Heart left ventricle (tissue), 16 donors: ENCODE measurements at regions of chr5 and their contacts with region 1.

Region 1: DNA sequence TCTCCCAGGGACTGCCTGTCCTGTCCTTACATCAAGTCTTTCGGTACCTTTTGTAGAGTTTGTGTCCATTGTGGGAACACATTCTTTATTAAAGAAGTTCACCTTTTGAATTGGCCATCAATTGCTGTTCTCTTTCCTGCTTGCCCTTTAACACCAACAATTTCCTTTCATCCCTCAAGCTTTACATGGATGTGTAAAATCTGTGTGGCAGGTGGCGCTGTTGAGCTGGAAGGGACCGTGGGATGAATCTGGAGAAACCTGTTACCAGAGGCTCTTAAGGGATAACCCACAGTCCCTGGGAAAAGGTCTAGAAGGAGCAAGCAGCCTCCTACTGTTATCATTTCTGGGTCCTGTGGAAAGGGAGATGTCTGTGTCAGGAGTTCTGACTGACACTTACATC is 7.9 kb upstream of the ZFP62 start:
- DNase-seq: peak; percentile 73 to 84 (median 76)
- ATAC-seq: peak in 3 of 4 donors; percentile 78 to 85 (median 80)
- H3K4me3 ChIP-seq: no peak overlapping the region
- H3K27ac ChIP-seq: no peak overlapping the region
- H3K4me1 ChIP-seq: peaks cover 0 to 15% (median 0%) of the 10 kb centered on the region in 12 donors
- H3K27me3 ChIP-seq: peaks cover 0 to 7% (median 0%) of the 10 kb centered on the region in 9 donors
- CTCF ChIP-seq: peak; percentile 55 to 80 (median 70)
- POLR2A ChIP-seq: no peak

Region 2: DNA sequence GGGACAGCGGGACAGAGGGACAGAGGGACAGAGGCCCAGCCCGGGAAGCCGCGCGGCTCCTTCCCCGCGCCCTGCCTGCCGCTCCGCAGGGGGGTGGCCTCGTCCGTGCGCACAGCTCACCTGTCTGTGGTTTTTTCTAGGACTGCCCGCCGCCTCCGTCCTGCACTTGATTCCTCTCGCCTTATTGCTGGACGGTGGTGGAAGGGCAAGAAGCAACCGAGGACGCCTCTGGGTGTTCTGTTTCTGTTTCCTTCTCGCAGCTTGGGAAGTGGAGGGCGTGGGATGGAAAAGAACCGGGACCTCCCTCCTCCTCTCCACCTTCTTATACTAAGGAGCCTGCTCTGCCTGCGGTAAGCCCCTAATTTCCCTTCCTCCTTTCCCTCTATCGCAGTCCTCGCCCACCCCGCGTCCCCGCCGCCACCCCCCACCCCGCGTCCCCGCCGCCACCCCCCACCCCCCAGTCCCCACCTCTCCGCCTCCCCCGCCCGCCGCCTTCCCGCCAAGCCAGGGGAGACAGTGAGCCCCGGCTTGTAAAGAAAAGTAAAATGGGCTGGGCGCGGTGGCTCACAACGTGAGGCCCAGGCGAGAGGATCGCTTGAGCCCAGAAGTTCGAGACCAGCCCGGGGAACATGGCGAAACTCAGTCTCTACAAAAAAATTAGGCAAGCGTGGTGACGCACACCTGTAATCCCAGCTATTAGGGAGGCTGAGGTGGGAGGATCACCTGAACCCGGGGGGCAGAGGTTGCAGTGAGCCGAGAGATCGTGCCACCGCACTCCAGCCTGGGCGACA is 210.0 kb before region 1 on chr5:
- intact Hi-C with region 1: no loop called
- DNase-seq: no peak
- ATAC-seq: no peak
- H3K4me3 ChIP-seq: peak overlapping the region in 2 of 12 donors; percentile 7 to 27
- H3K27ac ChIP-seq: no peak overlapping the region
- H3K4me1 ChIP-seq: no peaks in the 10 kb centered on the region
- H3K27me3 ChIP-seq: peaks cover 0 to 28% (median 19%) of the 10 kb centered on the region in 9 donors
- CTCF ChIP-seq: no peak
- POLR2A ChIP-seq: no peak

Region 3: DNA sequence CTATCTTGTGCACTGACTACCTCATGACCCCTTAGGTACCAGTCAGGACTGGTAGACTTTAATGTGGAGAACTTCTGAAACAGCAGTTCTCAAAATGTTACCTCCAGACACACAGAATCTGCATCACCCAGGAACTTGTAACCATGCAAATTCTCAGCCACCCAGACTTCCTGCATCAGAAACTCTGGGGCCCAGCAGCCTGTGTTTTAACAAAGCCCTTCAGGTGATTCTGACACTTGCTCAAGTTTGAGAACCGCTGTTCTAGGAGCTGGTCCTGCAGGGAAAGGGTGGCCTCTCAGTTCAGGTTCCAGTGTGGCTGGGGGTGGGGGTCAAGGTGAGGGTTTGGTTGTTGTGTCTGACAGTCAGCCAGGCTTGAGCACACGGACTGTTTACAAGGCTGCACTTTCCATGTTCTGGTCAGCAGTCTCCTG is 36.3 kb before region 1 on chr5:
- intact Hi-C with region 1: no loop called
- DNase-seq: no peak
- ATAC-seq: no peak
- H3K4me3 ChIP-seq: peak overlapping the region in 11 of 12 donors; percentile 67 to 100 (median 86)
- H3K27ac ChIP-seq: peak overlapping the region in 8 of 12 donors; percentile 23 to 100 (median 98)
- H3K4me1 ChIP-seq: peaks cover 0 to 47% (median 25%) of the 10 kb centered on the region in 12 donors
- H3K27me3 ChIP-seq: no peaks in the 10 kb centered on the region
- CTCF ChIP-seq: no peak
- POLR2A ChIP-seq: no peak

Region 4: GRCh38 chr5:180910735-180911134 is 41.8 kb after region 1 on chr5:
- intact Hi-C with region 1: no loop called
- DNase-seq: no peak
- ATAC-seq: no peak
- H3K4me3 ChIP-seq: no peak overlapping the region
- H3K27ac ChIP-seq: no peak overlapping the region
- H3K4me1 ChIP-seq: peaks cover 0 to 9% (median 0%) of the 10 kb centered on the region in 12 donors
- H3K27me3 ChIP-seq: peaks cover 0 to 11% (median 0%) of the 10 kb centered on the region in 9 donors
- CTCF ChIP-seq: no peak
- POLR2A ChIP-seq: no peak

Region 5: DNA sequence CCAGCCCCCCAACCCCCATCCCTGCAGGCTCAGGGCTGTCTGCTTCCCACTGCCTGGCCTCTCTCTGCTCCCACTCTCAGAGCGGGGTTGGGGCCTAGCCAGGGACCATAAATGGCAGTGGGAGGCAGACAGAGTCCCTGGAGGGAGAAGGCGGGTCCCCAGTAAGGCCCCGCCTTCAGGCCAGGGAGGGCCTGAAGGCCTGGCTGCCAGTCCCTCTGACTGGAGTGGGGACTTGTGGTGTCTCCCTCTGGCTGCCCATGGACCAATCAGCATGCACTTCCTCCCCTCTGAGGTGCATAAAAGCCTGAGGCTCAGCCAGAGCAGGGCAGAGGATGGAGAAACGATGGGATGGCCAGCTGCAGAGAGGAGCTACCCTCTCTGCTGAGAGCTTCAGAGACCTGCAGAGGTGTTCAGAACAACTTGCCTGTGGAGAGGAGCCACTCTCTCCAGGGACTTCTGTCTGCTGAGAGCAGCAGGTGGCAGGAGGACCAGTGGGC is 168.5 kb after region 1 on chr5:
- intact Hi-C with region 1: loop called in 5 of 10 experiments (anchors 5 to 10 kb)
- DNase-seq: peak in 1 of 5 donors; percentile 50
- ATAC-seq: peak; percentile 59 to 82 (median 72)
- H3K4me3 ChIP-seq: no peak overlapping the region
- H3K27ac ChIP-seq: peak overlapping the region in 3 of 12 donors; percentile 3 to 38 (median 22)
- H3K4me1 ChIP-seq: peaks cover 0 to 13% (median 1%) of the 10 kb centered on the region in 12 donors
- H3K27me3 ChIP-seq: peaks cover 0 to 11% (median 0%) of the 10 kb centered on the region in 9 donors
- CTCF ChIP-seq: no peak
- POLR2A ChIP-seq: peak in 1 of 2 donors; percentile 93

Region 6: DNA sequence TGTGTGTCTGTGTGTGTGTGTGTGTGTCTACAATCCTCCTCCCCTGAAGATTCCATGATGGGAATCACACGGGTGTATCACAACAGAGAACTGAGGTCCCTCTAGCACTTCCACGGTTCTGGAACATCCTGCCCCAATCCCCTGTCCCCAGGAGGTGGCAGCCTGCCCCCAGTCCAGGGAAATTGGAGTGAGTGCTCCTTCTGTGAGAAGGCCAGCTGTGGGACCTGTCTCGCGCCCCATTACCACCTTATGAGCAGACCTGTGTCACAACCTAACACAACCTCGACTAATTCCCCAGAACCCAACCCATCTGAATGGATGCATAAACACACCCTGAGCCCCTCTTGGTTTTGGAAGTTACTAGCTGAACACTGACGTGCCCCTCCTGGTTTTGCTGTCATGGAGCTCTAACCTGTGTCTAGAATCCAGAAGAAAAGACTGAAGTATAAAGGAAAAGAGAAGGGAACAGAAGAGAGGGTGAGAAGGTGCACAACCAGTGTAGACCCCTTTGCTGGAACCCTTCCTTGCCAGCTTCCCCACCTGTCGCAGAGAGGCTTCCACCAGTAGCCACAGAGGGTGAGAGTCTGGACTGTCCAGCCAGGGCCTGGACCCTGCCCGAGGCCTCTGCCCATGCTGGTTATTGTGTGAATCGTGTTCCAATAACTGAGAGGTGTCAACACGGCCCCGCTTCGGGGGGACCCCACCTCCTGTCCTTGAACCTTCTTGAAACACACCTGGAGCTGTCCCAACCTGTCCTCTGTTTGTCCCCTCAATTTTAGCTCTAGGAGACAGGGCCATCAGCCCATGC is 174.5 kb after region 1 on chr5:
- intact Hi-C with region 1: loop called in 5 of 10 experiments (anchors 5 to 10 kb)
- DNase-seq: peak in 1 of 5 donors; percentile 42
- ATAC-seq: peak in 2 of 4 donors; percentile 30 to 48
- H3K4me3 ChIP-seq: peak overlapping the region in 11 of 12 donors; percentile 11 to 65 (median 52)
- H3K27ac ChIP-seq: peak overlapping the region; percentile 60 to 92 (median 83)
- H3K4me1 ChIP-seq: peaks cover 0 to 20% (median 0%) of the 10 kb centered on the region in 12 donors
- H3K27me3 ChIP-seq: peaks cover 0 to 33% (median 9%) of the 10 kb centered on the region in 9 donors
- CTCF ChIP-seq: peak in 8 of 12 donors; percentile 6 to 48 (median 25)
- POLR2A ChIP-seq: no peak

Region 7: DNA sequence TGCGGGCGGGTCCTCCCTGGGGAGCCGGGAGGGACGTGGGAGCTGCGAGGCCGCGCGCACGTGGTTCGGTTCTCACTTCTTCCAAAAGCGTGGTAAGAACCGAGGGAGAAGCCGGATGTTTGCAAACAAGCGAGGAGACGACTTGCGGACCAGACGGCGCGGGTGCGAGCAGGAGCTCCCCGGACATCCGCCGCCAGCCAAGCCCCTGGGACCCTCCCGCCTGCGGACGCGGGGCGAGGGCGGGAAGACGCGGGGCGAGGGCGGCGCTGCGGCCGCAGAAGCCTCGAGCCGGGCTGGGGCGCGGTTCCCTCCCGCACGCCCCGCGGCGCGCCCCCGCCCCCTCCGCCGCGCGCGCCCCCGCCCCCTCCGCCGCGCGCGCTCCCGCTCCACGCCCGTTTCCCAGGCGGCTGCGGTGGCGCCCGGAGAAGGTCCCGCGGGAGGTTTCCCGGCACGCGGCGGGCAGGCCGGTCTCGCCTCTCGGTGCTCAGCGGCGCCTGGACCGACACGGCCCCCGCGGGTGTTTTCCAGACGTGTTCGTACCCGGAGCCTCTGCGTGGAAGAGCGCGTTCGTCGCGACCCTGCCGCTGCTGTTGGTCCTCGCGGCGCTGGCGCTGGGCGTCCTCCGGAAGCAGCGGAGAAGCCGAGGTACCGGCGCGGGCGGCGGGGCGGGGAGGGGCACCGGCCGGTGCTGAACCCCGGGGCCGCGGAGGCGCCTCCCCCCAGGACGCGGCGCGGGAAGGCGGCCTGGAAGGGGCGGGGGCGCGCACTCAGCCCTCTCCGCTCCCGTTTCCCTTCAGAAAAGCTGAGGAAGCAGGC is 183.9 kb after region 1 on chr5:
- intact Hi-C with region 1: loop called in 2 of 10 experiments (anchors 5 kb)
- DNase-seq: peak in 2 of 5 donors; percentile 49 to 65
- ATAC-seq: peak in 3 of 4 donors; percentile 36 to 55 (median 47)
- H3K4me3 ChIP-seq: peak overlapping the region; percentile 34 to 72 (median 60)
- H3K27ac ChIP-seq: peak overlapping the region; percentile 57 to 94 (median 88)
- H3K4me1 ChIP-seq: peaks cover 0 to 42% (median 18%) of the 10 kb centered on the region in 12 donors
- H3K27me3 ChIP-seq: peaks cover 20 to 88% (median 66%) of the 10 kb centered on the region in 9 donors
- CTCF ChIP-seq: no peak
- POLR2A ChIP-seq: no peak

Region 8: DNA sequence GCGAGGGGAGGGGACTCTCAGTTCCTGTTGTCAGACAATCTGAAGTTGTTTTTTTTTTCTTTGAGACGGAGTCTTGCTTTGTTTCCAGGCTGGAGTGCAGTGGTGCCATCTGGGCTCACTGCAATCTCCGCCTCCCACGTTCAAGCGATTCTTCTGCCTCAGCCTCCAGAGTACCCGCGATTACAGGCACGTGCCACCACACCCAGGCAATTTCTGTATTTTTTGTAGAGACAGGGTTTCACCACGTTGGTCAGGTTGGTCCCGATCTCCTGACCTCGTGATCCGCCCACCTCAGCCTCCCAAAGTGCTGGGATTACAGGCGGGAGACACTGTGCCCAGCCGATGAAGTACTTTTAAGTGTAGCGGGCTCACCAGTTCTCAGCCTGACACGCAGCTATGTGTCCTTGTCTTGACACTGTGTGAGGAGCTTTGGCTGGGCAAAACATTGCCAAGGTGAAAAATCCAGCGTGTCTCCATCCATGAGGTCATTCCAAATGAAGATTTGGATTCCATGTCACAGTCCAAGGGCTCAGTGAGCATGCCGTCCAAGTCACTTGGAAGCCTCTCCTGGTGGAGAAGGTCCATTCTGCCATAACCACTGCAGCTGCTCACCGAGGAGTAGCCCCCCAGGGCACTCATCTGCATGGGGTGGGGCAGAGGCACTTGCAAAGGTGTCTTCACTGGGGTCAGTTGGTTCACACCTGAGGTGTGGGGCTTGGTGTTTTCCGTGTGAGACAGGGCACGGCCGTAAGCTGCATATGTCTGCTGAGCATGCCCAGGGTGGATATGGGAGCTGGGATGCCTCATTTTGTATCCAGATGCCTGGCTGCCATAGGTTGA is 230.0 kb after region 1 on chr5:
- intact Hi-C with region 1: loop called in 1 of 10 experiments (anchors 10 kb)
- DNase-seq: no peak
- ATAC-seq: no peak
- H3K4me3 ChIP-seq: no peak overlapping the region
- H3K27ac ChIP-seq: no peak overlapping the region
- H3K4me1 ChIP-seq: peaks cover 0 to 5% (median 0%) of the 10 kb centered on the region in 12 donors
- H3K27me3 ChIP-seq: peaks cover 7 to 22% (median 18%) of the 10 kb centered on the region in 9 donors
- CTCF ChIP-seq: no peak
- POLR2A ChIP-seq: no peak

Region 9: DNA sequence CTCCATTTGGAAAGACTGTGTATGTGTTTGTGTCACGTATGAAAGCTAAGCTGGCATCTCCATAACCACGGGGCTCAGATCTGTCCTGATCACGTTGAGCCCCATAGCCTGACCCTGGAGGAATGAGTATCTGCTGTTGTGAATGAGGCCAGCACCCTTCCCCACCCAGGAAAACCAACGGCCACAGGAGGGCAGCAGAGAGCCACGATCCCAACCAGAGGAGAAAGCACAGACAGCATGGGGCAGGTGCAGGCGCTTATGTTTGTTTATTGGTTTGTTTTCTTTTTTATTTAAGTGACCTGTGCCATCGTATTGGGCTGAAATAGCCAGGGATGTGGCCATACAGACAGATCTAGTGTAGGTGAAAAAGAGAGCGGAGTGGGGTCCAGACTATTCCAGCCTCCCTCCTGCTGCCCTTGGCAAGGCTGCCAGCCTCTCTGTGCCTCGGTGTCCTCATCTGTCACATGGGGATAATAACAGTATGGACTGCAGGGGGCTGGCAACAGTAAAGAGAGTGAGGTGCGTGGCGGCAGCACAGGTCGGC is 290.4 kb after region 1 on chr5:
- intact Hi-C with region 1: loop called in 6 of 10 experiments (anchors 10 kb)
- DNase-seq: peak; percentile 79 to 91 (median 81)
- ATAC-seq: peak; percentile 72 to 94 (median 92)
- H3K4me3 ChIP-seq: no peak overlapping the region
- H3K27ac ChIP-seq: peak overlapping the region in 1 of 12 donors; percentile 81
- H3K4me1 ChIP-seq: peaks cover 0 to 14% (median 2%) of the 10 kb centered on the region in 12 donors
- H3K27me3 ChIP-seq: peaks cover 0 to 14% (median 9%) of the 10 kb centered on the region in 9 donors
- CTCF ChIP-seq: peak; percentile 83 to 91 (median 85)
- POLR2A ChIP-seq: no peak